HCT116 (cell line): ENCODE measurements at regions of chr12 and their contacts with region 1.

Region 1: DNA sequence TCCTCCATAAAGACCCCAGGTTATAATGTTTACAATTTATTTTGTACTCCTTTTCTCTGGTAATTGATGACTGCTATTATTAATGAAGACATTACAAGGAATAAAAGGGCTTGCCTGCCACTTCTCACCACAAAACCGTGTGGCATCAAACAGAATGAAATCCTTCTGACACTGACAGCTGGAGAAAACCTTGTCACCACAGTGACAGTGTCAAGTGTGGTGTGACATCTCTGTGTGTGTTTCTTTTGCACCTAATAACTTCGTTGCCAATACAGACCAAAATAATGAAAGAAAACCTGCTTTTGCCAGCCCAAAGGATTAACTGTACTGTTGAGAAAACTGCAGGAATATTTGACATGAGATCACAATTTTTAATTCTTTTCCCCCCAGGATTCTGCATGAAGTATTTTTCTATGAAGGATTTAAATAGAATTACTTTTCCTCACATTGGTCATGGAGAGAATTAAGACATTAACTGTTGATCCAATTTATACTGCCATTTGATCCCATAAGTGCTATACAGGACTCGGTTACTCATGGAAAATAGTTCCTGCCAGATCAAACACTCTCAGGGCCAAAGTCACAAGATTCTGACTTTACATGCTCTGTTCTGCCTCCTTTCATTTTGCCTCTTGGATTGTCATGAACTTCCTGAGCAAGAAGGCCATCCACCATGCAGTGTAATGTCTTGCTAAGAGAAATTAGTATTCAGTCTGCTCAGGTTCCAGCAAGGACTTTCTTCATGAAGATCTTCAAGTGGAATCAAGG is 60.4 kb upstream of the IFNG-AS1 start:
- DNase-seq: no peak
- ATAC-seq: no peak
- H3K4me3 ChIP-seq: no peak overlapping the region
- H3K27ac ChIP-seq: no peak overlapping the region
- H3K4me1 ChIP-seq: no peaks in the 10 kb centered on the region
- H3K27me3 ChIP-seq: no peaks in the 10 kb centered on the region
- CTCF ChIP-seq: no peak
- POLR2A ChIP-seq: no peak
- RAD21 ChIP-seq: no peak

Region 2: GRCh38 chr12:67943226-67943892 is 14.6 kb after region 1 on chr12:
- CTCF ChIA-PET with region 1: interaction called, 10 read pairs
- POLR2A ChIA-PET with region 1: no interaction called
- RAD21 ChIA-PET with region 1: no interaction called
- intact Hi-C with region 1: no loop called
- DNase-seq: peak; percentile 39
- ATAC-seq: peak; percentile 92
- H3K4me3 ChIP-seq: no peak overlapping the region
- H3K27ac ChIP-seq: no peak overlapping the region
- H3K4me1 ChIP-seq: no peaks in the 10 kb centered on the region
- H3K27me3 ChIP-seq: no peaks in the 10 kb centered on the region
- CTCF ChIP-seq: peak; percentile 47 to 81 (median 70)
- POLR2A ChIP-seq: no peak
- RAD21 ChIP-seq: peak; percentile 82